ENCODE measurements at regions of chr1 and their contacts with region 1.

Region 1: DNA sequence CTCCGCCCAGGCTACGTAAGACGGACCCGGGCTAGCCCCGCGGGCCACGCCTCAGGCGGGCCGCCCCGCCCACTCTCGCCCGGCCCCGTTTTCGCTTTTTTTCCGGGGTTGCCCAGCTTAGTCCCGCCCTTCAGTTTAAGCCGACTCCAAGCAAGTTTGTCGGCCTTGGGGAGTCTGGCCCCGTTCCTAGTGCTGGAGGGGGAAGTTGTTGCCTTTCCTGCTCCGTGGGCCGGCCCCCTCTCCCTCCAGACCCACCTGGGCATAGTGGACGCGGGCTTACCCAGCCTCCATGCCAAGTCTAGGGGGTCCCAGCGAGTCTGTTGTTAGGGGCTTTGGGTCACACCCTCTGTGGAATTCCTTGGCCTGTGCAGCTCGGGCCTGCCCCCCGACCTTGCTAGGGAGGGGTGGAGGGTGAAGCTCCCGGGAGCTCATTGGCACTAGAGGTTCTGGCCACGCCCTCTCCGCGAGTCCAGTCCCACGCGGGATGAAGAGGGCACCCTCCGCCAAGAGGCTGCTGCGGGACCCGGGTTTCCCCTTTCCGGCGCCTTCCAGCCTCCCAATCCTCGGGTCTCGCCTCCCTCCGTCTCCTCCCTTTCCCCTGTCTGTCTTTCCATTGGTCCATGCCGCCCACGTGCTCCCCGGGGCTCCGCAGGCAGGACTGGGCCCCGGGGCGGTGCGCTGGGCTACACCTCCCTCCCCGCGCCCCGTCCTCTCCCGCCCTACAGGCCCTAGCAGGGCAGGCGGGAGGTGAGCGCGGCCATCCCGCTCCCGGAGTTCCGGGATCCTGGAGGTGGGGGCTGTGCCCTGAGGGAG is 3.3 kb downstream of the RUSC1 start:
- DNase-seq: peak; percentile 96 to 98
- H3K4me3 ChIP-seq: peak overlapping the region; percentile 88
- H3K4me3 Mint-ChIP-seq: peak overlapping the region; percentile 94
- H3K27ac Mint-ChIP-seq: peak overlapping the region; percentile 88
- H3K4me1 ChIP-seq: peaks cover 11% of the 10 kb centered on the region
- H3K4me1 Mint-ChIP-seq: peaks cover 16% of the 10 kb centered on the region
- H3K27me3 ChIP-seq: no peaks in the 10 kb centered on the region
- H3K27me3 Mint-ChIP-seq: no peaks in the 10 kb centered on the region
- CTCF ChIP-seq: no peak

Region 2: GRCh38 chr1:155250633-155251449 is 73.2 kb before region 1 on chr1:
- CTCF ChIA-PET with region 1: interaction called, 34 read pairs
- POLR2A ChIA-PET with region 1: interaction called, 5 read pairs
- intact Hi-C with region 1: loop called (anchors 1 kb)
- DNase-seq: peak; percentile 92 to 95
- H3K4me3 ChIP-seq: no peak overlapping the region
- H3K4me3 Mint-ChIP-seq: no peak overlapping the region
- H3K27ac Mint-ChIP-seq: peak overlapping the region; percentile 7
- H3K4me1 ChIP-seq: peaks cover 4% of the 10 kb centered on the region; the same call in 1 of the 2 replicates
- H3K4me1 Mint-ChIP-seq: peaks cover 22% of the 10 kb centered on the region
- H3K27me3 ChIP-seq: no peaks in the 10 kb centered on the region
- H3K27me3 Mint-ChIP-seq: no peaks in the 10 kb centered on the region
- CTCF ChIP-seq: peak; percentile 97 to 99

Region 3: GRCh38 chr1:155261852-155262673 is 61.9 kb before region 1 on chr1 and contains the start of gene SCAMP3:
- CTCF ChIA-PET with region 1: no interaction called
- POLR2A ChIA-PET with region 1: interaction called, 3 read pairs
- intact Hi-C with region 1: loop called (anchors 1 kb)
- DNase-seq: peak; percentile 94 to 97
- H3K4me3 ChIP-seq: peak within 1 kb of the TSS; percentile 65
- H3K4me3 Mint-ChIP-seq: peak within 1 kb of the TSS; percentile 95
- H3K27ac Mint-ChIP-seq: peak within 1 kb of the TSS; percentile 94
- H3K4me1 ChIP-seq: peaks cover 4% of the 10 kb centered on the region
- H3K4me1 Mint-ChIP-seq: peaks cover 23% of the 10 kb centered on the region
- H3K27me3 ChIP-seq: no peaks in the 10 kb centered on the region
- H3K27me3 Mint-ChIP-seq: no peaks in the 10 kb centered on the region
- CTCF ChIP-seq: no peak
- total RNA-seq, gene SCAMP3: 53.4 and 55.9 TPM in 2 replicates

Region 4: GRCh38 chr1:155308493-155309422 is 15.2 kb before region 1 on chr1 and contains the start of gene FDPS:
- CTCF ChIA-PET with region 1: interaction called, 10 read pairs
- POLR2A ChIA-PET with region 1: interaction called, 3 read pairs
- intact Hi-C with region 1: loop called (anchors 1 kb)
- DNase-seq: peak; percentile 97 to 99
- H3K4me3 ChIP-seq: peak within 1 kb of the TSS; percentile 77
- H3K4me3 Mint-ChIP-seq: peak within 1 kb of the TSS; percentile 96
- H3K27ac Mint-ChIP-seq: peak within 1 kb of the TSS; percentile 99
- H3K4me1 ChIP-seq: peaks cover 12% of the 10 kb centered on the region; the same call in 1 of the 2 replicates
- H3K4me1 Mint-ChIP-seq: peaks cover 12% of the 10 kb centered on the region
- H3K27me3 ChIP-seq: no peaks in the 10 kb centered on the region
- H3K27me3 Mint-ChIP-seq: no peaks in the 10 kb centered on the region
- CTCF ChIP-seq: no peak
- total RNA-seq, gene FDPS: 228 and 235 TPM in 2 replicates

Region 5: DNA sequence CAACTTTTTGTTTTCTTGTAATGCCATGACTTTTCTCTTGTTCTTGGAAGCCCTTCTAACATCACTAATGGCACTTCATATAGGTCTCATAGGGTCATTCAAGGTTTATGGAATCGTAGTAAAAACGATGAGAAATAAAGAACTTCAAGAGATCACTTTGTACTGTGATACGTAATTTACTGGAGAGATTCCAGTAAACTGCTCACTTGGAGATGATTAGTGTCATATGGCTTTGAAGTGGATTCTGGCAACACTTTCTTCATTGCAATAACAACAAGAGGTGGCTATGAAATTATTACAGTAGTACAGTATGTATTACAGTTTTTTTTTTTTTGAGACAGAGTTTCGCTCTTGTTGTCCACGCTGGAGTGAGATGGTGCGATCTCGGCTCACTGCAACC is 100.1 kb after region 1 on chr1:
- CTCF ChIA-PET with region 1: no interaction called
- POLR2A ChIA-PET with region 1: no interaction called
- intact Hi-C with region 1: no loop called
- DNase-seq: no peak
- H3K4me3 ChIP-seq: no peak overlapping the region
- H3K4me3 Mint-ChIP-seq: no peak overlapping the region
- H3K27ac Mint-ChIP-seq: no peak overlapping the region
- H3K4me1 ChIP-seq: no peaks in the 10 kb centered on the region
- H3K4me1 Mint-ChIP-seq: no peaks in the 10 kb centered on the region
- H3K27me3 ChIP-seq: no peaks in the 10 kb centered on the region
- H3K27me3 Mint-ChIP-seq: no peaks in the 10 kb centered on the region
- CTCF ChIP-seq: no peak

Region 6: GRCh38 chr1:155591770-155592169 is 267.8 kb after region 1 on chr1:
- CTCF ChIA-PET with region 1: no interaction called
- POLR2A ChIA-PET with region 1: no interaction called
- intact Hi-C with region 1: loop called (anchors 10 kb)
- DNase-seq: peak in 1 of 2 experiments; percentile 45
- H3K4me3 ChIP-seq: no peak overlapping the region
- H3K4me3 Mint-ChIP-seq: no peak overlapping the region
- H3K27ac Mint-ChIP-seq: no peak overlapping the region
- H3K4me1 ChIP-seq: no peaks in the 10 kb centered on the region
- H3K4me1 Mint-ChIP-seq: no peaks in the 10 kb centered on the region
- H3K27me3 ChIP-seq: no peaks in the 10 kb centered on the region
- H3K27me3 Mint-ChIP-seq: no peaks in the 10 kb centered on the region
- CTCF ChIP-seq: peak; percentile 41 to 50

Measured in Caco-2 (cell line).